ENCODE measurements at regions of chr3 and their contacts with region 1.

Region 1: DNA sequence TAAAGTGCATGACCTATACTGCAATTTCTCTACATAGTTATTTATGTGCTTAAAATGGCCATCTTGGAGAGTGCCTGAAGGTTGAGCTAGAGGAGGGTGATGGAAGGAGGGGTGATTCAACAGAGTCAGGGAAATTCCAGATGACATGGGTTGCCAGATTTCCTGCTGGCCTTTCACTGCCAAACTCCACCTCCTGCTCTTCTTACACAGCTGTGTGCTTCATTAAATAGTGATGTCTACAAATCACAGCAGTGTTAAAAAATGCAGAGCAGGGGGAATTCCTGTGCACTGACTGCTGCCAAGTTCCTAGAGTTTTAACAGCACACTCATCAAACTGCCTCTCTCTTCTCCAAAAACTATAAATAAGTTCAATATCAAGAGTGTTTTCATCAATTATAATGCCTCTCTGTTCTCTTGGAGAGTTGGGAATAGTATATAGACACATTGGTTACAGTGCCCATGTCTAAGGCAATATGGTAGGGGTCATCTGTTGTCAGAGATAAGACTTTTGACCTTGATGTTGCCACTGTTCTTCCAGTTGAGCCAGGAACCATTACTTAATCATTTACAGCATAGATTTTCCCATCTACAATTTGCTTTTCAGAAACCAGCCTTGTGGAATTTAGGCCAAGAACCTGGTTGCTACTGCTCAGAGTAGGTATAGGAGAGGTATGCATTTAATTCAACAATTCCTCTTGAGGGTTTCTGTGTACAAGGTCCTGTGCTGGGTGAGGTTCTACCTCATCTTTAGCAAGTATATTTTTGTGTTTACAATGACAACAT is 79.6 kb downstream of the TP63 start:
- DNase-seq: peak in 1 of 2 donors; percentile 47
- H3K4me3 ChIP-seq: no peak overlapping the region
- H3K27ac ChIP-seq: peak overlapping the region in 1 of 2 donors; percentile 19
- H3K4me1 ChIP-seq: no peaks in the 10 kb centered on the region
- H3K27me3 ChIP-seq: no peaks in the 10 kb centered on the region
- CTCF ChIP-seq: no peak
- POLR2A ChIP-seq: no peak

Region 2: GRCh38 chr3:189369636-189370035 is 341.2 kb before region 1 on chr3:
- intact Hi-C with region 1: loop called (anchors 10 kb)
- DNase-seq: no peak
- H3K4me3 ChIP-seq: no peak overlapping the region
- H3K27ac ChIP-seq: no peak overlapping the region
- H3K4me1 ChIP-seq: no peaks in the 10 kb centered on the region
- H3K27me3 ChIP-seq: no peaks in the 10 kb centered on the region
- CTCF ChIP-seq: no peak
- POLR2A ChIP-seq: no peak